ENCODE measurements at regions of chr14 and their contacts with region 1.

Region 1: GRCh38 chr14:32252030-32252670 is 49.1 kb upstream of the RNU6-8 start:
- DNase-seq: peak; percentile 72 to 78
- H3K4me3 ChIP-seq: no peak overlapping the region
- H3K4me1 ChIP-seq: peaks cover 3% of the 10 kb centered on the region
- H3K27me3 ChIP-seq: no peaks in the 10 kb centered on the region

Region 2: DNA sequence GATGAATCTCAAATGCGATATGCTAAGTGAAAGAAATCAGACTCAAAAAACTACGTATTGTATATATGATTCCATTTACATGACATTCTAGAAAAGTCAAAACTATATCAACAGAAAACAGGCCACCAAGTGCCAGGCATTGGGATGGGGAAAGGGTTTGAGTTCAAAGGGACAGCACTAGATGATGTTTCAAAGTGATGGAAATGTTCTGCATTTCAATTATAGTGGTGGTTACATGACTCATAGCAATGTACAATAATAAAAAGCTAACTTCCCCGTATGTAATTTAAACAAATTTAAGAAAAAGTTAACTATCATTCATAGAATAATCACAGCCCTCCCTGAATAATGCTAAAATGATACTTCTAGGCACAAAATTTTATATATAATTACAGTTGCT is 1058.1 kb before region 1 on chr14:
- in situ Hi-C with region 1: no loop called
- DNase-seq: no peak
- H3K4me3 ChIP-seq: no peak overlapping the region
- H3K4me1 ChIP-seq: peaks cover 35% of the 10 kb centered on the region
- H3K27me3 ChIP-seq: no peaks in the 10 kb centered on the region

Region 3: GRCh38 chr14:31510222-31510621 is 741.9 kb before region 1 on chr14:
- in situ Hi-C with region 1: loop called (anchors 25 kb)
- DNase-seq: peak in 1 of 2 experiments; percentile 51
- H3K4me3 ChIP-seq: no peak overlapping the region
- H3K4me1 ChIP-seq: no peaks in the 10 kb centered on the region
- H3K27me3 ChIP-seq: no peaks in the 10 kb centered on the region

Region 4: GRCh38 chr14:31937721-31938346 is 314.3 kb before region 1 on chr14:
- in situ Hi-C with region 1: loop called (anchors 10 kb)
- DNase-seq: no peak
- H3K4me3 ChIP-seq: no peak overlapping the region
- H3K4me1 ChIP-seq: peaks cover 21% of the 10 kb centered on the region
- H3K27me3 ChIP-seq: no peaks in the 10 kb centered on the region

Region 5: GRCh38 chr14:32469388-32470160 is 217.4 kb after region 1 on chr14:
- in situ Hi-C with region 1: loop called (anchors 10 kb)
- DNase-seq: peak in 1 of 2 experiments; percentile 71
- H3K4me3 ChIP-seq: no peak overlapping the region
- H3K4me1 ChIP-seq: peaks cover 22% of the 10 kb centered on the region
- H3K27me3 ChIP-seq: no peaks in the 10 kb centered on the region

Region 6: GRCh38 chr14:33315721-33316120 is 1063.6 kb after region 1 on chr14:
- in situ Hi-C with region 1: no loop called
- DNase-seq: no peak
- H3K4me3 ChIP-seq: no peak overlapping the region
- H3K4me1 ChIP-seq: no peaks in the 10 kb centered on the region
- H3K27me3 ChIP-seq: peaks cover 4% of the 10 kb centered on the region; the same call in 1 of the 2 replicates

Measured in HAP-1 (cell line).